ENCODE measurements at regions of chr1 and their contacts with region 1.

Region 1: DNA sequence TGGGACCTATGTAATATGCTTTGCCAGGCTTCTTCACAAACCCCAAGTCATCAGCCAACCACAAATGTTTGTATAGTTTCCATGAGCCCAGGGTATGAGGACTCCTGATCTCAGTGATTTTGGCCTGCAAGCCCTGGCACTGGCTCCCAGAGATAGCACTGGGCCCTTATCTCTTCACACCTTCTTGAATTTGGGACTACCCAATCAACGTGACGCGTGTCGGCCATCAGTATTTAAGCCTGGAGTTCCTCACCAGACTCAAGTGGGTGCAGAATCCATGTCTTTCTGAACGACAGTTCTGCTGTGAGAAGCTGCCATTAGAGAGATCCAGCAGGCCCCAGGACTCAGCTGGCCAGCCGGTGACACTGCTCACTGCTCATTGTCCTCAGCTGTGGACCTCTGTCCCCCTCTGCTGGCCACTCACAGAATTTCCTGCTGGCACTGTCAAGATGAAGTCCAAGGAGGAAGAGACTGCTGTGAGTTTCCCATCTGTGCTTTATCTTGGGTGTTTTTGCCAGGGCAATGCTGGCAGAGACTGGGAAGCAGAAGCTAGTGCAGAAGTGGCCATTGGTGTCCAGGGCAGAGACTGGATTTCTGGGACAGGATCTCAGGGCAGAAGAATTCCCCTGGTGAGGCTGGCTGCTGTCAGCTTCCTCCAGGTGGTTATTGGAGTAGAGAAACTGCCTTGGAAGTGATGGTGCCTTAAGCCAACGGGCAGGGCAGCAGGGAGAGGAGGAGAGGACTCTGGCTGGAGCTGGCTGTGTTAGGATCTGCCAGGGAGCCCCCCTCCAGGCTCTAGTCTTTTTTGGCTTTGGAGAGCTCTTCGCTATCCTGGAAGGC is 28.4 kb downstream of the TMCC2 start:
- DNase-seq: peak; percentile 26
- H3K4me3 ChIP-seq: no peak overlapping the region
- CTCF ChIP-seq: peak; percentile 90

Region 2: DNA sequence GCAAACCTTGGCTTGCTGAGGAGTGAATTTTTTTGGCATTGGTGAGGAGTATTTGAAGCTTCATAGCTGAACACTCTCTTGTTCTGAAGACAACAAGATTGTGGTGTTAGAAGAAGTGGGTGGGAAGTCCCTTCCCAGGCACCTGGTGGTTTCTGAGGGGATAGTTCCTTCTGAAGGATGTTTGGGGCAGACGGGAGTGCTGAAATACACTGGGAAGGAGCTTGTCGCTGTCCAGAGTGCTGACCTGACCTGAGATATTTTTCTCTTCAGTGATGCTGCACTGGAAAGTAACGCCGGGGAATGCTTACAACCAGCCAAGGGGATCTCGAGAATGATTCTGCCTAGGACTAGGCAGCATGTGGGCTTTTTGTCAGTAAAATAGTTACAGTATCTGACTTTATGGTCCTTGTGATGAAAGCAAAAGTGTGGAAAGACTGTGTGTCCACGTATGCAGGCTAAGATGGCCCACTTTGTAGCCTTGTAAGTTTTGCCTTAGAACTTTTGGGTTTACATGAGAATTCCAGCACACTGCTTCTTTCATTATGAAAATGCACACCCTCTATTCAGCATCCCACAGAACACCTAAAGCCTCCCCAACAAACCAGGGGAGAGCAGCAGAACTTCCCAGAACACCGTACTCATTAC is 418.6 kb before region 1 on chr1:
- CTCF ChIA-PET with region 1: no interaction called
- POLR2A ChIA-PET with region 1: no interaction called
- DNase-seq: no peak
- H3K4me3 ChIP-seq: no peak overlapping the region
- CTCF ChIP-seq: no peak

Region 3: GRCh38 chr1:204941421-204942338 is 314.5 kb before region 1 on chr1:
- CTCF ChIA-PET with region 1: interaction called, 11 read pairs
- POLR2A ChIA-PET with region 1: no interaction called
- DNase-seq: no peak
- H3K4me3 ChIP-seq: no peak overlapping the region
- CTCF ChIP-seq: peak; percentile 78

Region 4: DNA sequence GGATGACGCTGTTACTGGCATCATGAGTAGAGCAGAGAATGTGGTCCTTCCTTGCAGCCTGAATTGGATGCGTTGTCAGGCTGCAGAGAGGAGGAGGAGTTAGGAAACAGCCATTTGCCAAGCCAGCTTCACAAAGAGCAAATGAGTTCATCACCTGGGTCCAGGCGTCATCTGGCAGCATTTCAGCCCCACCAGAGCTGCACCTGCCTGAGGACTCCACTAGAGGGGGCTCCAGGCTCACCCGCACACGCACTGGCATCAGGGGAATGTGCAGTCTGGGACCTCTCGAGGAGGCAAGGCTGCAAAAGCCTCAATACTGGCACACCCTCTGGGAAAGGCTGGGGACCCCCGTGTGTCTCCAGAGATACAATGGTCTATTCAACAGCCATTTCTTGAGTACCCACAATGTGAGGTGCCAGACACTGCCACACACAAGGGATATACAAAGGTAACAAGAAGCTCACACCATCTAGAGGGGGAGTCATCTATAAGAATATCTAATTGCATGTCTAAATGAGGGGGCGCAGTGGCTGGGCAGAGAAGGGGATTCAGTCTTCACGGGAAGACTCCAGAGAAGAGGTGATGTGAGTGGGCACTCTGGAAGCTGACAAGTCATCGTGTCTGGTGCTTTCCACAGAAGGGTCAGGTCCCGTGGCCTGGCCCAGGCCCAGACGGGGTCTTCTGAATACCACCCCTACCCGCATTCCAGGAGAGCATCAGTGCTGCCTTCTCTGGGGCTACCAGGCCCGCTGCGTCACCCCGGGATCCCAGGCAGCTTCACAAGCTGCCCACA is 266.7 kb before region 1 on chr1:
- CTCF ChIA-PET with region 1: interaction called, 269 read pairs
- POLR2A ChIA-PET with region 1: no interaction called
- DNase-seq: peak; percentile 17
- H3K4me3 ChIP-seq: no peak overlapping the region
- CTCF ChIP-seq: peak; percentile 98

Region 5: DNA sequence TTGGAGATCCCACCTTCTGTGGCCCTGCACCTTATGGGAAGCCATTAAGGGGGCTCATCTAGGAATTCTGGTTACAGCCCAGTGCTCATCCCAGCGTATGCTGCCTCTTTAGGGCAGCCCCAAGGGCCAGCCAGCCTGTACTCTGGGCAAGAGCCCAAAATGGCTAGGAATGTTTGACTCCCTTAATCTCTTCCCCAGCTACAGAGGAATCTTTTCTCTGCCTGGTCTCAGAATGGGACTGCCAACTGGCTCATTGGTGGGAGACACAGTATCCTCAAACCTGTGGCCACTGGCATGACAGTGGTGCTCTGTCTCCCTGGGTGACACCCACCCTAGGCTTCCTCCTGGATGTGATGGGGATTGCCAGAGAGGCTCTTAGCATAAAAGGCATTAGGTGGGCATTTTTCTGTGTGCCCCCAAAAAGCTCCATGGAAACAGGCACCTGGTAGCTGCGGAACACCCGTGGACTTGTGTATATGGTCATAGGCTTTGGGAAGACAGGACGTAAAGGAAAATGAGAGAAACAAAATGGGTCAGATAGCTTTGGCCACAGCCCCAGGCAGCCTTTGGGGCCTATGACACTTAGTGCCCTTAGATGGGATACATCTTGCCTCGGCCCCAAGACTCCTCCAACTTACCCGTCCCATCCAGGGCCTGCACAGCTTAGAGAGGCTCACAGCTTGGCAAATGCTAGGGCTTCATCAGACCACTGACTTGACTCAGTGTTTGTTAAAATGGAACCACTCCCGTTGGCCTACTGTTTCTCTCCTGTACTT is 178.8 kb before region 1 on chr1:
- CTCF ChIA-PET with region 1: interaction called, 18 read pairs
- POLR2A ChIA-PET with region 1: no interaction called
- DNase-seq: no peak
- H3K4me3 ChIP-seq: no peak overlapping the region
- CTCF ChIP-seq: no peak

Region 6: GRCh38 chr1:205121660-205122488 is 134.3 kb before region 1 on chr1 and contains the start of gene RBBP5:
- CTCF ChIA-PET with region 1: interaction called, 88 read pairs
- POLR2A ChIA-PET with region 1: interaction called, 3 read pairs
- DNase-seq: peak; percentile 94
- H3K4me3 ChIP-seq: peak within 1 kb of the TSS; percentile 99
- CTCF ChIP-seq: peak; percentile 88

Region 7: GRCh38 chr1:205266611-205267305 is 10.6 kb after region 1 on chr1:
- CTCF ChIA-PET with region 1: interaction called, 163 read pairs
- POLR2A ChIA-PET with region 1: no interaction called
- DNase-seq: no peak
- H3K4me3 ChIP-seq: no peak overlapping the region
- CTCF ChIP-seq: no peak

Region 8: GRCh38 chr1:205365945-205366463 is 109.8 kb after region 1 on chr1:
- CTCF ChIA-PET with region 1: no interaction called
- POLR2A ChIA-PET with region 1: no interaction called
- DNase-seq: no peak
- H3K4me3 ChIP-seq: no peak overlapping the region
- CTCF ChIP-seq: no peak